ENCODE measurements at regions of chrX and their contacts with region 1.

Region 1: GRCh38 chrX:119118780-119119395 is 8.7 kb downstream of the KIAA1210 start:
- DNase-seq: no peak
- H3K4me3 ChIP-seq: no peak overlapping the region
- H3K27ac ChIP-seq: no peak overlapping the region
- H3K4me1 ChIP-seq: no peaks in the 10 kb centered on the region
- H3K27me3 ChIP-seq: peaks cover 0 to 4% (median 0%) of the 10 kb centered on the region in 7 donors
- CTCF ChIP-seq: peak; percentile 39 to 78 (median 72)
- POLR2A ChIP-seq: no peak

Region 2: GRCh38 chrX:119266364-119266995 is 147.6 kb after region 1 on chrX:
- intact Hi-C with region 1: loop called (anchors 10 kb)
- DNase-seq: no peak
- H3K4me3 ChIP-seq: no peak overlapping the region
- H3K27ac ChIP-seq: no peak overlapping the region
- H3K4me1 ChIP-seq: no peaks in the 10 kb centered on the region
- H3K27me3 ChIP-seq: peaks cover 0 to 27% (median 0%) of the 10 kb centered on the region in 7 donors
- CTCF ChIP-seq: peak in 10 of 11 experiments; percentile 33 to 64 (median 53)
- POLR2A ChIP-seq: no peak

Region 3: GRCh38 chrX:119916310-119916709 is 797.4 kb after region 1 on chrX:
- intact Hi-C with region 1: no loop called
- DNase-seq: no peak
- H3K4me3 ChIP-seq: no peak overlapping the region
- H3K27ac ChIP-seq: no peak overlapping the region
- H3K4me1 ChIP-seq: no peaks in the 10 kb centered on the region
- H3K27me3 ChIP-seq: no peaks in the 10 kb centered on the region
- CTCF ChIP-seq: no peak
- POLR2A ChIP-seq: no peak

Measured in spleen (tissue), 13 donors.